ENCODE measurements at regions of chr12 and their contacts with region 1.

Region 1: DNA sequence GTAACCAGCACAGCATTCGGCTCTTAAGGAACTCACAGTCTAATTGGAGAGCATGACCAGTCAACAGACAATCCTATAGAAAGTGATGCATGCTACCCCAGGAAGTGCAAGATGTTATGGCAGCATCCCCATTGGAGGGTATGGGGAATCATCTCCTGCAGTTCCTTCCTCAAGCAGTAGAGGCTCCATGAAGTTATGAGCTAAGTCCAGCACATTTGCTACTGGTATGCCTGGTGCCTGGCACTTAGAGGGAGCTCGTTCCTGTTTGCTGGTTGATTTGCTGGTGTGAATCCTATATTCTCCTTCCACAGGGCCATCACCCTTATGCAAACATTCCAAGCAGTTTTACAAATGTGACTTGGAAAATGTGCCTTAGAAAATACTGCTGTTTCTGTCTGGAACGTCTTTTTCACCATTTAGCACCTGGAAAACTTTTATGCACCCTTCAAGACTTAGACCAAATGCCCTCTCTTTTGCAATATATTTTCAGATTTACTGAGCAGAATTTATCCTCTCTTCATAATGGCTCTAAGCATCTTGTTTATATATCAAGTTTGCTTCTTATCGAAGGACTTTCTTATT is 136.1 kb upstream of the WSCD2 start:
- DNase-seq: no peak
- ATAC-seq: no peak
- H3K4me3 ChIP-seq: no peak overlapping the region
- H3K27ac ChIP-seq: no peak overlapping the region
- H3K4me1 ChIP-seq: no peaks in the 10 kb centered on the region
- H3K27me3 ChIP-seq: peaks cover 0 to 25% (median 10%) of the 10 kb centered on the region in 7 donors
- CTCF ChIP-seq: peak in 7 of 9 donors; percentile 18 to 45 (median 23)

Region 2: GRCh38 chr12:108193917-108194316 is 201.0 kb after region 1 on chr12:
- intact Hi-C with region 1: loop called in 5 of 10 experiments (anchors 5 to 10 kb)
- DNase-seq: peak in 1 of 2 donors; percentile 8
- ATAC-seq: no peak
- H3K4me3 ChIP-seq: no peak overlapping the region
- H3K27ac ChIP-seq: no peak overlapping the region
- H3K4me1 ChIP-seq: peaks cover 0 to 6% (median 0%) of the 10 kb centered on the region in 9 donors
- H3K27me3 ChIP-seq: no peaks in the 10 kb centered on the region
- CTCF ChIP-seq: peak; percentile 52 to 76 (median 70)

Region 3: DNA sequence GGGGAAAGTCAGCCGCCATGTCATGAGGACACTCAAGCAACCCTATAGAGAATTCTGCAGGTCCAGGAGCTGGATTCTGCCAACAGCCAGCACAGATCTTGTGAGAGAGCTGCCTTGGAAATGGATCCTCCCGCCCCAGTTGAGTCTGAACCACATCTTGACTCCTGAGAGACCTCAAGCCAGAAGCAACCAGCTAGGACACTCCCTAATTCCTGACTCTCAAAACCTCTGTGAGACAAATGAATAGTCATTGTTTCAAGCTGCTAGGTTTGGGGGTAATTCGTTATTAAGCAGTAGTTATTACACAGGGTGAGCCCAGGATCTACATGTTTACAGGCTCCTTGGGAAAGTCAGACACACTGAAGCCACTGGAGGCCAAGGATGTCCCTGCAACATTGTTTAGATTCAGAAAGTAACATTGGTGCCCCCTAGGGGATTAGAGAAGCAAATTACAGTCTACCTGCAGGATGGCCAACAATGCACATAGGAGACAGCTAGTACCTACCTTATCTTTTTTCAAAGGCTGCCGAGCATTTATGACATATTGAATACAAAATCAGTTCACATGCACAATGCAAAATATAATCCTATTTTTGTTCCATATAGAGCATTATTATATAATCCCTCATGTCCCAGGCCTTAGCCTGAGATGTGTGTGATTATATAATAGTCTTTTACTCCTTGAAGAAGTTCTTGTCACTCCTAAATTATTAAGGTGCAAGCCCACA is 464.2 kb after region 1 on chr12:
- intact Hi-C with region 1: loop called in 2 of 10 experiments (anchors 5 to 10 kb)
- DNase-seq: peak in 1 of 2 donors; percentile 19
- ATAC-seq: peak; percentile 55 to 82 (median 76)
- H3K4me3 ChIP-seq: no peak overlapping the region
- H3K27ac ChIP-seq: no peak overlapping the region
- H3K4me1 ChIP-seq: peaks cover 0 to 5% (median 0%) of the 10 kb centered on the region in 9 donors
- H3K27me3 ChIP-seq: peaks cover 0 to 33% (median 20%) of the 10 kb centered on the region in 7 donors
- CTCF ChIP-seq: peak; percentile 52 to 79 (median 75)

Region 4: GRCh38 chr12:108468201-108468968 is 475.4 kb after region 1 on chr12:
- intact Hi-C with region 1: loop called in 1 of 10 experiments (anchors 10 kb)
- DNase-seq: peak in 1 of 2 donors; percentile 10
- ATAC-seq: no peak
- H3K4me3 ChIP-seq: no peak overlapping the region
- H3K27ac ChIP-seq: no peak overlapping the region
- H3K4me1 ChIP-seq: no peaks in the 10 kb centered on the region
- H3K27me3 ChIP-seq: peaks cover 0 to 51% (median 27%) of the 10 kb centered on the region in 7 donors
- CTCF ChIP-seq: no peak

Region 5: GRCh38 chr12:108507971-108508642 is 515.1 kb after region 1 on chr12:
- intact Hi-C with region 1: loop called in 6 of 10 experiments (anchors 2 to 10 kb)
- DNase-seq: no peak
- ATAC-seq: no peak
- H3K4me3 ChIP-seq: no peak overlapping the region
- H3K27ac ChIP-seq: no peak overlapping the region
- H3K4me1 ChIP-seq: peaks cover 0 to 9% (median 5%) of the 10 kb centered on the region in 9 donors
- H3K27me3 ChIP-seq: peaks cover 0 to 15% (median 6%) of the 10 kb centered on the region in 7 donors
- CTCF ChIP-seq: no peak

Region 6: GRCh38 chr12:108514973-108515814 is 522.2 kb after region 1 on chr12 and contains the start of gene FICD:
- intact Hi-C with region 1: loop called in 3 of 10 experiments (anchors 2 to 10 kb)
- DNase-seq: peak; percentile 100
- ATAC-seq: peak; percentile 93 to 98 (median 97)
- H3K4me3 ChIP-seq: peak within 1 kb of the TSS; percentile 65 to 96 (median 79)
- H3K27ac ChIP-seq: peak within 1 kb of the TSS in 9 of 10 donors; percentile 19 to 92 (median 73)
- H3K4me1 ChIP-seq: peaks cover 0 to 29% (median 16%) of the 10 kb centered on the region in 9 donors
- H3K27me3 ChIP-seq: peaks cover 0 to 2% (median 0%) of the 10 kb centered on the region in 7 donors
- CTCF ChIP-seq: no peak
- total RNA-seq, gene FICD: 2.1 to 4.4 (median 2.8) TPM

Measured in heart right ventricle (tissue), 16 donors.